Caco-2 (cell line): ENCODE measurements at regions of chr11 and their contacts with region 1.

Region 1: GRCh38 chr11:39365809-39366436 is 2093.5 kb downstream of the LRRC4C start:
- DNase-seq: peak; percentile 53 to 62
- H3K4me3 ChIP-seq: no peak overlapping the region
- H3K4me3 Mint-ChIP-seq: no peak overlapping the region
- H3K27ac Mint-ChIP-seq: peak overlapping the region; percentile 21
- H3K4me1 ChIP-seq: peaks cover 35% of the 10 kb centered on the region
- H3K4me1 Mint-ChIP-seq: peaks cover 25% of the 10 kb centered on the region
- H3K27me3 ChIP-seq: no peaks in the 10 kb centered on the region
- H3K27me3 Mint-ChIP-seq: no peaks in the 10 kb centered on the region
- CTCF ChIP-seq: peak; percentile 44 to 52

Region 2: GRCh38 chr11:37946155-37946766 is 1419.7 kb before region 1 on chr11:
- CTCF ChIA-PET with region 1: interaction called, 3 read pairs
- POLR2A ChIA-PET with region 1: no interaction called
- intact Hi-C with region 1: loop called (anchors 1 kb)
- DNase-seq: peak in 1 of 2 experiments; percentile 51
- H3K4me3 ChIP-seq: no peak overlapping the region
- H3K4me3 Mint-ChIP-seq: no peak overlapping the region
- H3K27ac Mint-ChIP-seq: no peak overlapping the region
- H3K4me1 ChIP-seq: no peaks in the 10 kb centered on the region
- H3K4me1 Mint-ChIP-seq: no peaks in the 10 kb centered on the region
- H3K27me3 ChIP-seq: no peaks in the 10 kb centered on the region
- H3K27me3 Mint-ChIP-seq: no peaks in the 10 kb centered on the region
- CTCF ChIP-seq: peak; percentile 45 to 54

Region 3: DNA sequence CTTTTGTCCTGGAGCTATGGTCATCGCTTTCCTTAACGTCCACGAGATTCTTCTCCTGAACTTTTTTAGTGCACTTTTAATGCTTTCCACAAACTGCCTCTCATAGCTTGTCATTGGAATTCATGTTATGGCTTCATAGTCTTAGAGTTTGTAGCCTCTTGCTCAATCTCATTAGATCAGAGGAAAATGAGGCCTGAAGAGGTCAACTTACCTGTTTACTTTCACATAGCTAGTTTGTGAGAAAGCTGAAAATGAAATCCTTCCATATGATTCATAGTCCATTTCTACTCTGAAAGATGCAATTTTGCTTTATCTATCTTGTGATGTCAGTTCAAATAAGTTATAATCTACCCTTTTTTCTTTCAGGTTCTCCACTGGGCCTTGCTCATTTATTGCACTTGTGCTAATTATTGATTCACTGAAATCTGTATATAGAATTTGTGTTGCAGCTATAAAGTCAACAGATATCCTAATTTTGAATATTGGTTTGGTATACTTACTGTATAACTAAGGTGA is 1020.6 kb before region 1 on chr11:
- CTCF ChIA-PET with region 1: no interaction called
- POLR2A ChIA-PET with region 1: no interaction called
- intact Hi-C with region 1: loop called (anchors 5 kb)
- DNase-seq: peak in 1 of 2 experiments; percentile 42
- H3K4me3 ChIP-seq: no peak overlapping the region
- H3K4me3 Mint-ChIP-seq: no peak overlapping the region
- H3K27ac Mint-ChIP-seq: peak overlapping the region; percentile 81
- H3K4me1 ChIP-seq: peaks cover 32% of the 10 kb centered on the region
- H3K4me1 Mint-ChIP-seq: peaks cover 9% of the 10 kb centered on the region
- H3K27me3 ChIP-seq: no peaks in the 10 kb centered on the region
- H3K27me3 Mint-ChIP-seq: no peaks in the 10 kb centered on the region
- CTCF ChIP-seq: no peak

Region 4: DNA sequence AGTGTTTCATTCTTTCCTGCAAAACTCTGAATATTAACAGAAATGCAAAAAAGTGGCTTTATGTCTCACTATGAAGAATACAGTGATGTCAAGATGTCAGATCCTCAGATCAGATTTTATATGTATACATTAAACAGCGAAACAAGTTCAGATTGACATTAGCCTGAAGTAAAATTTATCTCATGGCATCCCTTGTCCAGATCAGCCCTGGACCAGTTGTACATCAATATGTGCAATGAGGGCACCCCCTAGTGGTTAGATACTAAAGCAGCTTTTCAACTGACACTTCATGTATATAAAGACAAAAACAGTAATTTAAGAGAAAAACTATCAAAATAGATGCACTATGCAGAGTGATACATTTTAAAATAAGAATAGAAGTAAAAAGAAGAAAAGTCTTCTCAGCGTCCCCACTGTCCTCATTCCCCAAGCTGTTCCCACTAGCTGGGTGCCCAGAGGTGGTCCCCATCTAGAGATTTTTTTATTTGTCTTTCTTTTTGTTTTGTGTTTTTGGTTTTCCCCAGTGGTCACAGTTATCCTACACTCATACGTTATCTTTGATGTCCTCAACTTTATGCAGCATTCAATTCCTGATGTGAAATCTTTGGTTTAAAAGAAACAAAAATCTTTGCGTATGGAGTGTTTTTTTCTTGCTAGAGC is 574.5 kb before region 1 on chr11:
- CTCF ChIA-PET with region 1: no interaction called
- POLR2A ChIA-PET with region 1: no interaction called
- intact Hi-C with region 1: loop called (anchors 2 kb)
- DNase-seq: peak; percentile 55 to 76
- H3K4me3 ChIP-seq: no peak overlapping the region
- H3K4me3 Mint-ChIP-seq: no peak overlapping the region
- H3K27ac Mint-ChIP-seq: no peak overlapping the region
- H3K4me1 ChIP-seq: peaks cover 8% of the 10 kb centered on the region
- H3K4me1 Mint-ChIP-seq: no peaks in the 10 kb centered on the region
- H3K27me3 ChIP-seq: no peaks in the 10 kb centered on the region
- H3K27me3 Mint-ChIP-seq: no peaks in the 10 kb centered on the region
- CTCF ChIP-seq: peak; percentile 79 to 80

Region 5: DNA sequence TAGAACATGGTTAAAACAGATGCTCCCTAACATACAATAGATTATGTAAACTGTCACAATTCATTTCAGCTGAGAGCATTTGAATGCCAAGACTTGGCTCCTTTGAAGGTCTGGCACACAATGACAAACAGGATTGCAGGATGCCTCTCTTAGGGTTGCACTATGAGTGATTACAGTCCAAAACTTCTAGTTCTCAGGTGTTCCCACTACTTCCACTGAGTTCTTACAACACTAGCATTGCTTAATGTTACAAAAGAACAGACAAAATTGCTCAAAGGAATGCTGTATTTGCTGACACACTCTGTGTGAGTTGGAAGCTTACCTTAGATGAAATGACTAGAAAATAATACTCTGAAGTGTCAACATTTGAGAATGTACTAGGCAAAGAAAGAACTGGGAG is 354.1 kb before region 1 on chr11:
- CTCF ChIA-PET with region 1: no interaction called
- POLR2A ChIA-PET with region 1: no interaction called
- intact Hi-C with region 1: loop called (anchors 10 kb)
- DNase-seq: peak in 1 of 2 experiments; percentile 36
- H3K4me3 ChIP-seq: no peak overlapping the region
- H3K4me3 Mint-ChIP-seq: no peak overlapping the region
- H3K27ac Mint-ChIP-seq: peak overlapping the region; percentile 36
- H3K4me1 ChIP-seq: no peaks in the 10 kb centered on the region
- H3K4me1 Mint-ChIP-seq: no peaks in the 10 kb centered on the region
- H3K27me3 ChIP-seq: no peaks in the 10 kb centered on the region
- H3K27me3 Mint-ChIP-seq: no peaks in the 10 kb centered on the region
- CTCF ChIP-seq: no peak

Region 6: DNA sequence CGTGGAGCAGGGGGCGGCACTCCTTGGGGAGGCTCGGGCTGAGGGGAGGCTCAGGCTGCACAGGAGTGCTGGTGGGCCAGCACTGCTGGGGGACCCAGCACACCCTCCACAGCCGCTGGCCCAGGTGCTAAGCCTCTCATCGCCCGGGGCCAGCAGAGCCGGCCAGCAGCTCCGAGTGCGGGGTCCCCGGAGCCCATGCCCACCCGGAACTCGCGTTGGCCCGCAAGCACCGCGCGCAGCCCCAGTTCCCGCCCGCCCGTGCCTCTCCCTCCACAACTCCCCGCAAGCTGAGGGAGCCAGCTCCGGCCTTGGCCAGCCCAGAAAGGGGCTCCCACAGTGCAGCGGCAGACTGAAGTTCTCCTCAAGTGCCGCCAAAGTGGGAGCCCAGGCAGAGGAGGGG is 173.3 kb before region 1 on chr11:
- CTCF ChIA-PET with region 1: no interaction called
- POLR2A ChIA-PET with region 1: no interaction called
- intact Hi-C with region 1: loop called (anchors 1 kb)
- DNase-seq: no peak
- H3K4me3 ChIP-seq: no peak overlapping the region
- H3K4me3 Mint-ChIP-seq: no peak overlapping the region
- H3K27ac Mint-ChIP-seq: no peak overlapping the region
- H3K4me1 ChIP-seq: no peaks in the 10 kb centered on the region
- H3K4me1 Mint-ChIP-seq: peaks cover 9% of the 10 kb centered on the region
- H3K27me3 ChIP-seq: no peaks in the 10 kb centered on the region
- H3K27me3 Mint-ChIP-seq: no peaks in the 10 kb centered on the region
- CTCF ChIP-seq: no peak

Region 7: GRCh38 chr11:39236916-39237315 is 129.0 kb before region 1 on chr11:
- CTCF ChIA-PET with region 1: no interaction called
- POLR2A ChIA-PET with region 1: no interaction called
- intact Hi-C with region 1: loop called (anchors 2 kb)
- DNase-seq: peak in 1 of 2 experiments; percentile 19
- H3K4me3 ChIP-seq: no peak overlapping the region
- H3K4me3 Mint-ChIP-seq: no peak overlapping the region
- H3K27ac Mint-ChIP-seq: no peak overlapping the region
- H3K4me1 ChIP-seq: peaks cover 16% of the 10 kb centered on the region; the same call in 1 of the 2 replicates
- H3K4me1 Mint-ChIP-seq: peaks cover 14% of the 10 kb centered on the region
- H3K27me3 ChIP-seq: no peaks in the 10 kb centered on the region
- H3K27me3 Mint-ChIP-seq: no peaks in the 10 kb centered on the region
- CTCF ChIP-seq: no peak